ENCODE measurements at regions of chr18 and their contacts with region 1.

Region 1: DNA sequence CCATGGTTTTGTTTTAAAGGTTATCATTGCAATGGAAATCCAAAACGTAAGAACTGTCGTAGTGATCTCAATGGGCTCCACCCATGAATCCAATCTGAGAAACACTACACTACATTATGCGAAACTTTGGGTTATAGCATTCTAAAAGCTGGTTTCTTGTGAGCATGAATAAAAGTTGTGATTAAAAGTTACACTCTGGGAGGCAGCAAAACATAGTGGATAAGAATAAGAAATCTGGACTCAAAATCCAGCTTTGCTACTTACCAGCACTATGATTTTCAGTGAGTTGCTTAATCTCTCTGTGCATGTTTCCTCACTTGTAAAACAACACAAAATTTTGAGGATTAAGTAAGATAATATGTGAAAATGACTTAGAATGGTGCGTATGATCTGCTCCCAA is 25.7 kb upstream of the THOC1 start:
- DNase-seq: no peak
- H3K4me3 ChIP-seq: no peak overlapping the region
- H3K27ac ChIP-seq: no peak overlapping the region
- H3K4me1 ChIP-seq: no peaks in the 10 kb centered on the region
- H3K27me3 ChIP-seq: no peaks in the 10 kb centered on the region
- CTCF ChIP-seq: no peak
- POLR2A ChIP-seq: no peak

Region 2: DNA sequence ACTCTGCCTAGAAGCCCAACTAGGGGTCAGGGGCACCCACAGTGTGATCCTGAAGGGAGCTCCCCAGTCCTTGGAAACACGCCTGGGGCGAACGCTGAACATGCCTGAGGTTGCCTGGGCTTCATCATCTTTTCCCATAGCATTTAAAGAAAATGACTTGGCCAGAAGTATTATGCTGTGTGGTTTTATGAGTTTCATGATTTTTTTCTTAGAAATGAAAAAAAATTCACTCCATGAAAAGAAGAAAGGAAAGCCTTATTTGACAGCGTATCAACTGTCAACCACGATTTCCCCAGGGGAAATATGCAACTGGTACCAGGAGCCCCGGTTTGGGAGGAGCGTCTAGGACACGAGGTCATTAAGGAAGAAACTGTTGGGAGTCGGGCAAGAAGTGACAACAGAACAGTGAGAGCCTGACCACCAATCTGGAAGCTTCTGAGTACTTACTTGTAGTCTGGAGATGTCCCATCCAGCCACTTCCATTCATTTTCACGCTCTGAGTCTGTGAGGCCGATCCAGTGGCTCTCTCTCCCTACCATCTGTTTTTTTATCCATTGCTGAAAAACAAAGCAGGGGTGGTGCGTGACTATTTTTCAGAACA is 37.8 kb after region 1 on chr18:
- intact Hi-C with region 1: no loop called
- DNase-seq: no peak
- H3K4me3 ChIP-seq: no peak overlapping the region
- H3K27ac ChIP-seq: no peak overlapping the region
- H3K4me1 ChIP-seq: no peaks in the 10 kb centered on the region
- H3K27me3 ChIP-seq: no peaks in the 10 kb centered on the region
- CTCF ChIP-seq: no peak
- POLR2A ChIP-seq: no peak

Region 3: GRCh38 chr18:616380-616995 is 323.0 kb after region 1 on chr18:
- intact Hi-C with region 1: loop called (anchors 5 to 10 kb)
- DNase-seq: peak in 1 of 7 donors; percentile 19
- H3K4me3 ChIP-seq: no peak overlapping the region
- H3K27ac ChIP-seq: no peak overlapping the region
- H3K4me1 ChIP-seq: peaks cover 0 to 14% of the 10 kb centered on the region in 2 donors
- H3K27me3 ChIP-seq: no peaks in the 10 kb centered on the region
- CTCF ChIP-seq: peak; percentile 41 to 83 (median 72)
- POLR2A ChIP-seq: no peak